Mammary epithelial cell (primary cell): ENCODE measurements at regions of chr11 and their contacts with region 1.

Region 1: DNA sequence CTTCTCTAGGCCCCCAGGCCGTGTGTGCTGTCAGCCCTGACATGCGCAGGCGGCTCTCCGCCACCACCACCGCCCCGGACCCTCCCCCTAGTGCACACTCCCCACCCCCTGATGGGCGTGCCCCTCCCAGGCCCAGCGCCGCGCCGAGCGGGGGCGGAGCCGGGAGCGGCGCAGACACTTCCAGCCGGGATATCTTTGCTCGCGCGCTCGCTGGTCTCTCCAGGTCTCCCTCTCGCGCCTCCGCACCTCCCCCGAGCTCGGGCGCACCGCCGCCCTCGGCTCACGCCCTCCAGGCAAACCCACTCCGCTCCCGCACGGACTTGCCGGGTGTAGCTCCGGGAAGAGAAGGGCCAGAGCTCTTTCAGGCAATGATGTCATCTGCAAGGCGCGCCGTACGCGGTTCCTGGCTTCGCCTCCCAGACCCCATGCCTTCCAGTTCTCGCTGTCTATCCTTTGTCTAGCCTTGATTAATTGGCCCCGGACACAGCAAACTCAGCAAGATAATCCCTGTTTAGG is at the start of gene SCN3B:
- DNase-seq: peak; percentile 67
- H3K4me3 ChIP-seq: peak within 1 kb of the TSS; percentile 66 to 74 (median 71)
- H3K27ac ChIP-seq: no peak within 1 kb of the TSS
- H3K4me1 ChIP-seq: peaks cover 7% of the 10 kb centered on the region
- H3K27me3 ChIP-seq: no peaks in the 10 kb centered on the region
- CTCF ChIP-seq: no peak
- total RNA-seq, gene SCN3B: 0.31 to 1.2 TPM

Region 2: GRCh38 chr11:123188508-123189165 is 466.0 kb before region 1 on chr11:
- CTCF ChIA-PET with region 1: no interaction called
- dilution Hi-C with region 1: no loop called
- in situ Hi-C with region 1: no loop called
- intact Hi-C with region 1: no loop called
- DNase-seq: peak; percentile 68
- H3K4me3 ChIP-seq: peak overlapping the region; percentile 2 to 24 (median 5)
- H3K27ac ChIP-seq: peak overlapping the region; percentile 57
- H3K4me1 ChIP-seq: peaks cover 74% of the 10 kb centered on the region
- H3K27me3 ChIP-seq: no peaks in the 10 kb centered on the region
- CTCF ChIP-seq: no peak

Region 3: GRCh38 chr11:123678246-123678645 is 23.6 kb after region 1 on chr11:
- CTCF ChIA-PET with region 1: no interaction called
- dilution Hi-C with region 1: no loop called
- in situ Hi-C with region 1: no loop called
- intact Hi-C with region 1: loop called (anchors 2 kb)
- DNase-seq: peak; percentile 81
- H3K4me3 ChIP-seq: no peak overlapping the region
- H3K27ac ChIP-seq: no peak overlapping the region
- H3K4me1 ChIP-seq: peaks cover 14% of the 10 kb centered on the region
- H3K27me3 ChIP-seq: no peaks in the 10 kb centered on the region
- CTCF ChIP-seq: no peak

Region 4: GRCh38 chr11:123696183-123696582 is 41.6 kb after region 1 on chr11:
- CTCF ChIA-PET with region 1: no interaction called
- dilution Hi-C with region 1: no loop called
- in situ Hi-C with region 1: no loop called
- intact Hi-C with region 1: no loop called
- DNase-seq: peak; percentile 25
- H3K4me3 ChIP-seq: no peak overlapping the region
- H3K27ac ChIP-seq: no peak overlapping the region
- H3K4me1 ChIP-seq: no peaks in the 10 kb centered on the region
- H3K27me3 ChIP-seq: no peaks in the 10 kb centered on the region
- CTCF ChIP-seq: peak in 1 of 2 donors; percentile 18